ENCODE measurements at regions of chr11 and their contacts with region 1.

Region 1: DNA sequence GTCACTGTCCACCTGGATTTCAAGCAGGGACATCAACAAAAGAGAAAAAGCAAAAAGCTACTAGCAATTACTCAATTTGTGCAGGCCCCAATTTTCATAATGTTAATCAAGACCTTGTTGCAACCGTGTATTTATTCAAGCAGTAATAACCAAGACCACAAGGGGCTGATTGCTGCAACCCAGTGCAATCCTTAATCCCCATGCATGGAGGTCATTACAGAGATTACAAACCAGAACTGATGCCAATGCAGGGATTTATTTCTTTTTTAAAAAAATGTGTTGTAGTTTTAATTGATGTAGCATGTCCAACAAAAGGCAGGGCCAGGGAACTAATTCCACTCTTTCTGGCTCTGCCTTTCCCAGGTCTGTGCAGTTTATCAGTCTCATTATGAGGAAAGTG is 18.4 kb downstream of the TECTA start:
- H3K4me3 ChIP-seq: no peak overlapping the region
- H3K27ac ChIP-seq: no peak overlapping the region
- H3K4me1 ChIP-seq: no peaks in the 10 kb centered on the region
- CTCF ChIP-seq: no peak

Region 2: DNA sequence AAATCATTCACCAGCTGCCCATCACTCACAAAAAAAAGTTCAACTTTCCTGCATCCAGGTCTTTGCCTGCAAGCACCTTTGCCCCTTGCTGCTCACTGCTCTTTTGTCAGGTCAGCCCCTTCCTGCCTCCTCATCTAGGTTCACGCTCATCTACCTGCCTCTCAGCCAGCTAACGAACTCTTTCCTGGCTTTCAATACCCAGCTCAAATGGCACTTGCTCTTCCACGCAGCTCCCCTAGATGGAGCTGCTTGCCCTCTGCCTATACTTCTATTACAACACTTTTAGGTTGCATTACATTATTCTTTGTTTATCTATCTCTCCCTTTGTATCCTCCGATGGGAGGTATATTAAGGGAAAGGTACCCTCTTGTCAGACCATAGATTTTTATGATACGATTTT is 174.4 kb before region 1 on chr11:
- CTCF ChIA-PET with region 1: no interaction called
- POLR2A ChIA-PET with region 1: no interaction called
- H3K4me3 ChIP-seq: no peak overlapping the region
- H3K27ac ChIP-seq: no peak overlapping the region
- H3K4me1 ChIP-seq: no peaks in the 10 kb centered on the region
- CTCF ChIP-seq: no peak

Region 3: GRCh38 chr11:121132196-121132976 is 12.9 kb after region 1 on chr11:
- CTCF ChIA-PET with region 1: interaction called, 10 read pairs
- POLR2A ChIA-PET with region 1: no interaction called
- H3K4me3 ChIP-seq: no peak overlapping the region
- H3K27ac ChIP-seq: no peak overlapping the region
- H3K4me1 ChIP-seq: no peaks in the 10 kb centered on the region
- CTCF ChIP-seq: no peak

Region 4: GRCh38 chr11:121144723-121145122 is 25.3 kb after region 1 on chr11:
- CTCF ChIA-PET with region 1: no interaction called
- POLR2A ChIA-PET with region 1: no interaction called
- H3K4me3 ChIP-seq: no peak overlapping the region
- H3K27ac ChIP-seq: no peak overlapping the region
- H3K4me1 ChIP-seq: no peaks in the 10 kb centered on the region
- CTCF ChIP-seq: no peak

Measured in HEK293 (cell line).